CD14-positive monocyte (primary cell): ENCODE measurements at regions of chr3 and their contacts with region 1.

Region 1: GRCh38 chr3:155870133-155870944 is at the start of gene GMPS:
- DNase-seq: peak; percentile 88 to 92 (median 90)
- H3K4me3 ChIP-seq: peak within 1 kb of the TSS; percentile 66 to 98 (median 90)
- H3K4me3 Mint-ChIP-seq: peak within 1 kb of the TSS; percentile 90 to 97
- H3K27ac ChIP-seq: peak within 1 kb of the TSS; percentile 75 to 84
- H3K27ac Mint-ChIP-seq: peak within 1 kb of the TSS; percentile 85 to 96 (median 95)
- H3K4me1 ChIP-seq: peaks cover 23 to 30% of the 10 kb centered on the region in 2 donors
- H3K4me1 Mint-ChIP-seq: peaks cover 23% of the 10 kb centered on the region
- H3K27me3 ChIP-seq: no peaks in the 10 kb centered on the region
- H3K27me3 Mint-ChIP-seq: peaks cover 0 to 5% (median 2%) of the 10 kb centered on the region in 3 donors
- CTCF ChIP-seq: peak; percentile 62
- polyA plus RNA-seq, gene GMPS: 14.3 to 43.4 (median 27.4) TPM

Region 2: DNA sequence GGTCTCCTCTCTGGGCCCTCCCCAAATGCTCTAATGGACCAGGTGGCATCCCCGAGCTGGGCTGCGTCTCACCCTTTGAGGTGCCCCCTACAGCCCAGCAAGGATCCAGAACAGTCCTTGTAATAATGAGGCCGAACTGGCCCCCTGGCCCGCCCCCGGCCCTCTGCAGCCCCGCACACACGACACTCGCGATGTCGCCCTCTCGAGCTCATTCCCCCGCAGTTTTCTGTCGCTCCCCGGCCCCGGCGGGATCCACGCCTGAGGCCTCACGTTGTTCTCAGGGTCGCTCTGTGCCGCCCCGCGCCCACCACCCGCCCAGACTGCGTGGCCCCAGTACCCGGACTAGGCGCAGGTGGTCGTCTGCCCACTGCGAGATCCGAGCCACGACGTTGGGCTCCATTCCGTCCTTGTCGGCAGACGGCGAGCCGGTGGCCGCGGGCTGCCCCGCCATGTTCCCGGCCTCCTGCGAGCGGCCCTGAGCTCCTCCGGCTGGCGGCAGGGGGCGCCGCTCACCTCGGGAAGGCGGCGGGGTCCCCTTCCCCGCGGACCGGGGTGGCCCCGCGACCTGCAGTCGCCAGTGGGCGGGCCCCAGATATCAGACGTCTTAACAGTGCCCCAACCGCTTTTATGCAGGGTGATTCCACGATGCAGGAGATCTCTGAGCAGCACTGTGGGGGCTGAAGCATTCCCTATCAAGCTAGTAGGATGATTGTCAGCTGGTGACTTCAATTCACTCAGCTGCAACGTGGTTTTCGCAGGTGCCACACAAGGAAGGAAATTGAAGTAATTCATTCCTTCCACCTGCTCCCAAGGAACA is 64.3 kb before region 1 on chr3 and contains the start of gene C3orf33:
- intact Hi-C with region 1: loop called (anchors 5 to 10 kb)
- DNase-seq: peak; percentile 55 to 70 (median 60)
- H3K4me3 ChIP-seq: peak within 1 kb of the TSS; percentile 80 to 84 (median 83)
- H3K4me3 Mint-ChIP-seq: peak within 1 kb of the TSS; percentile 92 to 94
- H3K27ac ChIP-seq: peak within 1 kb of the TSS in 1 of 2 donors; percentile 50
- H3K27ac Mint-ChIP-seq: peak within 1 kb of the TSS in 6 of 7 donors; percentile 24 to 82 (median 66)
- H3K4me1 ChIP-seq: peaks cover 4 to 9% of the 10 kb centered on the region in 2 donors
- H3K4me1 Mint-ChIP-seq: peaks cover 7% of the 10 kb centered on the region
- H3K27me3 ChIP-seq: no peaks in the 10 kb centered on the region
- H3K27me3 Mint-ChIP-seq: peaks cover 0 to 2% (median 0%) of the 10 kb centered on the region in 3 donors
- CTCF ChIP-seq: peak; percentile 97
- polyA plus RNA-seq, gene C3orf33: 0.34 to 0.97 (median 0.49) TPM

Region 3: GRCh38 chr3:155854141-155854940 is 16.0 kb before region 1 on chr3 and contains the start of gene SLC33A1:
- intact Hi-C with region 1: loop called in 1 of 2 experiments (anchors 2 kb)
- DNase-seq: peak; percentile 100
- H3K4me3 ChIP-seq: peak within 1 kb of the TSS; percentile 66 to 94 (median 66)
- H3K4me3 Mint-ChIP-seq: peak within 1 kb of the TSS; percentile 98 to 99
- H3K27ac ChIP-seq: peak within 1 kb of the TSS; percentile 97 to 98
- H3K27ac Mint-ChIP-seq: peak within 1 kb of the TSS; percentile 99 to 100 (median 100)
- H3K4me1 ChIP-seq: peaks cover 37 to 42% of the 10 kb centered on the region in 2 donors
- H3K4me1 Mint-ChIP-seq: peaks cover 41% of the 10 kb centered on the region
- H3K27me3 ChIP-seq: no peaks in the 10 kb centered on the region
- H3K27me3 Mint-ChIP-seq: peaks cover 0 to 2% (median 1%) of the 10 kb centered on the region in 3 donors
- CTCF ChIP-seq: no peak
- polyA plus RNA-seq, gene SLC33A1: 9.7 to 19.1 (median 15.0) TPM

Region 4: GRCh38 chr3:155908086-155908485 is 37.7 kb after region 1 on chr3:
- intact Hi-C with region 1: no loop called
- DNase-seq: no peak
- H3K4me3 ChIP-seq: peak overlapping the region in 1 of 3 experiments; percentile 7
- H3K4me3 Mint-ChIP-seq: no peak overlapping the region
- H3K27ac ChIP-seq: peak overlapping the region in 1 of 2 donors; percentile 62
- H3K27ac Mint-ChIP-seq: peak overlapping the region in 5 of 7 donors; percentile 10 to 78 (median 51)
- H3K4me1 ChIP-seq: peaks cover 7 to 8% of the 10 kb centered on the region in 2 donors
- H3K4me1 Mint-ChIP-seq: peaks cover 12% of the 10 kb centered on the region
- H3K27me3 ChIP-seq: no peaks in the 10 kb centered on the region
- H3K27me3 Mint-ChIP-seq: peaks cover 0 to 1% (median 0%) of the 10 kb centered on the region in 3 donors
- CTCF ChIP-seq: no peak